ENCODE measurements at regions of chr12 and their contacts with region 1.

Region 1: DNA sequence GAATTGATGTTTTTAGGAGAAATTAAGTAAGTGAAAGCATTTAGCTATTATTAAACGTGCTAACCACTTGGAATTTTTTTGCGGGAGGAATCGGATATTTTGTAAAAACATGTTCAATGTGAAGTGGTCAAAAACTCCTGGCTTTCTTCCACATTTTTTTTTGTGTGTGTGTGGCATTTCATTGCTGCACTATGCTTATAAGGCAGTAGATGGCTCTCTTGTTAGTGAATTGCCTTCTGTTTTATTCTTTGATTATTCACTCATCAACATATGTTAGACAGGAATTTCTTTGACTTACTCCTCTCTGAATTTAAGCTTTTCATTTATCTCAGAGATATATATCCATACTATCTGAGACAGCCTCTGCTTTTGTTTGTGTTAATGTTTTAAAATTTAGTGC is 71.3 kb downstream of the DERA start:
- DNase-seq: no peak
- H3K4me3 ChIP-seq: no peak overlapping the region
- H3K27ac ChIP-seq: no peak overlapping the region
- H3K27me3 ChIP-seq: no peaks in the 10 kb centered on the region
- CTCF ChIP-seq: peak; percentile 71

Region 2: DNA sequence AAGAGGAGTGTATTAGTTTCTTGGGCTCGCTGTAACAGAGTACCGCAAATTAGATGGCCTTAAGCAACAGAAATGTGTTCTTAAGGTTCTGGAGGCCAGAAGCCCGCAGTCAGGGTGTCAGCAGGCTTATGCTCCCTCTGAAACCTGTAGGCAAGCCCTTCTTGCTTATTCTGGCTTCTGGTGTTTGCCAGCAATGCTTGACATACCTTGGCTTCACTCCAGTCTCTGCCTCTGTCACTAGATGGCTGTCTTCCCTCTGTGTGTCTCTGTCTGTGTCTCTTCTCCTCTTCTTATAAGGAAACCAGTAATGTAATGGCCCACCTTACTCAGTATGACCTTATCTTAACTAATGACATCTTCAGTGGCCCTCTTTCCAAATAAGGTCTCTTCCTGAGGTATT is 13.8 kb after region 1 on chr12:
- CTCF ChIA-PET with region 1: interaction called, 16 read pairs
- POLR2A ChIA-PET with region 1: no interaction called
- DNase-seq: no peak
- H3K4me3 ChIP-seq: no peak overlapping the region
- H3K27ac ChIP-seq: no peak overlapping the region
- H3K27me3 ChIP-seq: no peaks in the 10 kb centered on the region
- CTCF ChIP-seq: no peak

Region 3: DNA sequence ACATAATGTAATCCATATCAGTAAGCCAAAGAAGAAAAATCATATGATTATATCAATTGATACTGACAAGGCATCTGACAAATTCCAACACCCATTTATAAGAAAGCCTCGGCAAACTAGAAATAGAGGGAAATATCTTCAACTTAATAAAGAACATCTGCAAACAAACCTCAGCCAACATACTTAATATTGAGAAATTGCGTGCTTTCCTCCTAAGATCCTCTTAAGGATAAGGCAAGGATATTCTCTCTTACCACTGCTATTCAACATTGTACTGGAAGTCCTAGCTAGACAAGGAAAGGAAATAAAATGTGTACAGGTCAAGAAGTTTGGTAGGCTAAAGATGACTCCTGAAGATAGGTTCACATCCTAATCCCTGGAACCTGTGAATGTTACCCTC is 44.5 kb after region 1 on chr12:
- CTCF ChIA-PET with region 1: no interaction called
- POLR2A ChIA-PET with region 1: no interaction called
- DNase-seq: no peak
- H3K4me3 ChIP-seq: no peak overlapping the region
- H3K27ac ChIP-seq: no peak overlapping the region
- H3K27me3 ChIP-seq: no peaks in the 10 kb centered on the region
- CTCF ChIP-seq: no peak